Ovary (tissue), 10 donors: ENCODE measurements at regions of chr20 and their contacts with region 1.

Region 1: DNA sequence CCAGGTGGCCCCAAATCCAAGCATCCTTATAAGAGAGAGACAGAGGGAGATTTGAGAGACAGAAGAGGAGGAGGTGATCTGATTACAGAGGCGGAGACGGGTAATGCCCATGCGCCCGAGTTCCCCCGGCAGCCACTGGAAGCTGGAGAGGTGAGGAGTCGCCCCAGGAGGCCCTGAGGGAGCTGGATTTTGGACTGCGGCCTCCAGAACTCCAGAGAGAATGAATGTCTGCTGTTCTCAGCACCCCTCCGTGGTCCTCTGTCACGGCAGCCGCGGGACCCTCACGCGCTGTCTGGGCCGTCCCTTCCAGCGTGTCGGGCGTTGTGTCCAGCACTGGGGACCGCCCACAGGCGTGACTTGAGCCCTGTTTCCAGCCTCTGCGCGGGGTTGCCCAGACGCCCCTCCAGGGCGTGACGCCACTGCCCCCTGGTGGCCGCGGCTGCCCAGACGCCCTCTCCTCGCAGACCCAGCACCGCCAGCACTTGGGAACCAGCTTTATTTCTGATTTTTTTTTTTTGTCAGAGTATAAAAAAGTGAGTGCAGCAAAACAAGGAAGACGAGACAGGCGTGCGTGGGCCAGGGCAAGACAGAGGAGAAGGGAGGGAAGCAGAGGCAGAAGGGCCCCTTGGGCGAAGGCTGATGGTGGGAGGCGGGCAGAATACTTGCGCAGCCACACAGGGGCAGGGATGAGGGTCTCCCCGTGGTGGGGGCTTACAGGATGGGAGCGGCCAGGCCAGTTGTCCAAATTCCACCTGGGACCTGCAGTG is 4.1 kb upstream of the ZNF512B start:
- DNase-seq: peak; percentile 81 to 91 (median 90)
- H3K4me3 ChIP-seq: peak overlapping the region; percentile 3
- H3K27ac ChIP-seq: no peak overlapping the region
- H3K4me1 ChIP-seq: peaks cover 6% of the 10 kb centered on the region
- H3K27me3 ChIP-seq: peaks cover 5% of the 10 kb centered on the region
- CTCF ChIP-seq: peak; percentile 96 to 99 (median 97)
- EP300 ChIP-seq: no peak
- POLR2A ChIP-seq: no peak

Region 2: DNA sequence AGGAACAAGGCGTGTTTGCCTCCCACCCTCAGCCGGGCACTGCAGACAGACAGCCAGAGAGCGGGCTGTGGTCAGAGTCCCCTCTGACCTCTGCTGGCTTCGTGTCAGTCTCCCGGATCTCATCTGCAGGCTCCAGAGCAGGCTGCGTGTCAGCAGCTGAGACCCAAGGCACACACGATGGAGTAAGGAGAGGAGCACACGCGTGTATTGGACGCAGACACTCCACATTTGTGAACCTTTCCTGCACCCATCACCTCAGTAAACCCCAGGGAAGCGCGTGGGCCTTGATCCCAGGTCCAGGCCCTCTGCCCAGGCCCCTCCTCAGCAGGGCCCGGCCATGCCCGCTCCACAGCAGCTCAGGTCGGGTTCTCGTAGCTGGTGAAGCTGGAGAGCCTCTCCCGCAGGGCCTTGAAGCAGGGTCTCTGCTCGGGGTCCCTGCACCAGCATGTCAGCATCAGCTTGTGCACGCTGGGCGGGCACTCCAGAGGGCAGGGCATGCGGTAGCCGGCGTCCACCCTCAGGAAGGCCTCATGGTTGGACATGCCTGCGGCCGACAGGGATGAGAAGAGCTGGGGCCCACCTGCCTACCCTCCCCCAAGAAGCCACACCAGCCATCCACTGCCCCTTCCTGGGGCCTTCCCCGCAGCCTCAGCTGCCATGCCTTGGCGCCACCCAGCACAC is 444.5 kb before region 1 on chr20:
- intact Hi-C with region 1: no loop called
- DNase-seq: peak in 1 of 5 donors; percentile 21
- H3K4me3 ChIP-seq: no peak overlapping the region
- H3K27ac ChIP-seq: no peak overlapping the region
- H3K4me1 ChIP-seq: no peaks in the 10 kb centered on the region
- H3K27me3 ChIP-seq: no peaks in the 10 kb centered on the region
- CTCF ChIP-seq: no peak
- EP300 ChIP-seq: no peak
- POLR2A ChIP-seq: no peak

Region 3: DNA sequence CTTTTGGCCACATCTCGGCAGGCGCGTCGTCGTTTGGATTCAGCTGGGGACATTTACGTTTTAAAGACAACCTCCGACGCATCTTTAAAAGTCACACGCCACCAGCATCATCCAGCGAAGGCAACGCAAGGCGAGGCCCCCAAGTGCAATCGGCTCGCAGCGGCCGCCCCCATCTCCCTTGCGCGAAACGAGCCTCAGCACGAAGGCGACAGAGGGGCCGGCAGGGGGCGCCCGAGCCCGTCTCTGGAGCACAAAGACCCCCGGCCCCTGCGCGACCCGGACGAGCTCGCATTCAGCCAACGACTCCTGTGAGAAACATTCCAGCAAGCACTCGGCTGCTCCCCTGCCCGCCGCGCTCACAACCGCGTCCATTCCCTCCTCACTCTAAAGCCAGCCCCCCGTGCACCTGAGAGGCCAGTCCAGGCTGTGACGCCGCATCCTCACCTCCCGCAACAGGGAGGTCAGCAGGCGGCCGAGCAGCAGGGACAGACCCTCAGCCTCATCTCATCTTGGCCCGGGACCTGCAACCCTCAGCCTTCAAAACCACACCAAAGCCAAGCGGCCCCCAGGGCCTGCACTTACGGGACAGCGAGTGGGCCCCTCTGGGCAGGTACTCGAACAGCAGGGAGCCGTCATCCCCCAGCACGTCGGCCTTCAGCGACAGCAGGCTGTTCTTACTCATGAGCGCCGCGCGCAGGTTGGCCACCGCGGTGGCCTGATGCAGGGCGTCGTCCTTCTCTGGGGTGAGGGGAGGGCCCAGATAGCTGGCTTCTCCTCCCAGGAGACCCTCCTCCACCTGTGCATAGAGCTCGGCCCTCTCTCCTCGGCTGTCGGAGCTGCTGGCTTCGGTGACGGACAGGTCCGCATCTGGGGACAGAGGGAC is 198.5 kb before region 1 on chr20:
- intact Hi-C with region 1: loop called in 1 of 4 experiments (anchors 10 kb)
- DNase-seq: peak; percentile 65 to 85 (median 80)
- H3K4me3 ChIP-seq: no peak overlapping the region
- H3K27ac ChIP-seq: peak overlapping the region; percentile 51 to 58
- H3K4me1 ChIP-seq: peaks cover 20% of the 10 kb centered on the region
- H3K27me3 ChIP-seq: no peaks in the 10 kb centered on the region
- CTCF ChIP-seq: peak; percentile 80 to 84 (median 82)
- EP300 ChIP-seq: no peak
- POLR2A ChIP-seq: peak; percentile 10

Region 4: DNA sequence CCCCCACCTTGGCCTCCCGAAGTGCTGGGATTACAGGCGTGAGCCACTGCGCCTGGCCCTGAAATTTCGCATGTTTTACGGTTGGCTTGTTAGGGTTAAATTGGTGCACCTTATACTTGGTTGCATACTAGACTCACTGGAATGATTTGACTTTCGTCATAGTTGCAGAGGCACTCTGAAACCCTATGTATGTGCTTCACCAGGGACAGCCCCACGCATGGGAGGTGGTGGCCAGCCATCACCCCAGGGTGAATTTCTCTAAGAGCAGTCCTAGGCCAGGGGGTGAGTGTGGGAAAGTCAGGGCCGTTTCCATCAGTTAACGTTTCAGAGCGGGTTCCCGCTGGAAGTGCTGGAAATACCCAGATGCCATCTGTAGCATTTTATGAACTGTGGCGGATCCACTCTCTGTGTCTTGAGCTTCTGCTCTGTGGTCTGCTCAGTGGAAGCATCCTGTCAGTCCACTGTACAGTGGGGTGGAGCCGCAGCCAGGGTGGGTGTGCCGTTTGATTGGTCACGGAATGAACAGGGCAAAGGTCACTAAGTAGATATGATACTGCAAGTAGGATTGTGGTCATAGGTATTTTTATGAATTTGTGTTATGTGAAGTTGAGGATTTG is 65.7 kb before region 1 on chr20:
- intact Hi-C with region 1: loop called in 2 of 4 experiments (anchors 5 kb)
- DNase-seq: no peak
- H3K4me3 ChIP-seq: no peak overlapping the region
- H3K27ac ChIP-seq: no peak overlapping the region
- H3K4me1 ChIP-seq: peaks cover 4% of the 10 kb centered on the region
- H3K27me3 ChIP-seq: no peaks in the 10 kb centered on the region
- CTCF ChIP-seq: no peak
- EP300 ChIP-seq: no peak
- POLR2A ChIP-seq: no peak